AG04449 (cell line): ENCODE measurements at regions of chr10 and their contacts with region 1.

Region 1: DNA sequence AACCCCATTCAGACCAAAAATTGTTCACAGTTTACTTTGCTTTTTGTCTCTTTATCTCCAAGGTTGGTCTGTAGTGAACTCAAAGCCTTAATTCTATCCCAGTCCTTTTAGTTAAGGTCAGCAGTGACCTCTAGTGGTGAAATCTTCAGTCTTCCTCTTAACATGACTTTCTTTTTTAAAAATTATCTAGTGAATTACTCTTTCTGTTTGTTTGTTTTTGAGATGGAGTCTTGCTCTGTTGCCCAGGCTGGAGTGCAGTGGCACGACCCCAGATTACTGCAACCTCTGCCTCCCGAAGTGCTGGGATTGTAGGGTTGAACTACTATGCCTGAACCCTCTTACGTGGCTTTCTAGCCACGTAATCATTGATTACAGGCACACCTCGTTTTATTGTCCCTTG is 25.0 kb downstream of the ZNF487 start:
- DNase-seq: peak; percentile 55
- H3K4me3 ChIP-seq: no peak overlapping the region
- CTCF ChIP-seq: peak; percentile 40

Region 2: DNA sequence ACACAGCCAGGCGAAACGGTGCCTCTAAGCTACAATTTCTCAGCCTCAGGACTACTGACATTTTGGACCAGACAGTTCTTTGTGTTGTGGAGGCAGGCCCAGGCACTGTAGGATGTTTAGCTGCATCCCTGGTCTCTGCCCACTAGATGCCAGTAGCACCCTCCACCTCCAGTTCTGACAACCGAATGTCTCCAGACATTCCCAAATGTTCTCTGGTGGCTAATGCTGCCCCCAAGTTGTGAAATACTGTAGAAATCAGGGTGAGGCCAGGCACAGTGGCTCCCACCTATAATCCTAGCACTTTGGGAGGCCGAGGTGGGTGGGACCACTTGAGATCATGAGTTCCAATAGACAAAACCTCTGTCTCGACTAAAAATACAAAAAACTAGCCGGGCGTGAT is 71.2 kb before region 1 on chr10:
- CTCF ChIA-PET with region 1: interaction called, 27 read pairs
- POLR2A ChIA-PET with region 1: no interaction called
- DNase-seq: no peak
- H3K4me3 ChIP-seq: no peak overlapping the region
- CTCF ChIP-seq: peak; percentile 63

Region 3: DNA sequence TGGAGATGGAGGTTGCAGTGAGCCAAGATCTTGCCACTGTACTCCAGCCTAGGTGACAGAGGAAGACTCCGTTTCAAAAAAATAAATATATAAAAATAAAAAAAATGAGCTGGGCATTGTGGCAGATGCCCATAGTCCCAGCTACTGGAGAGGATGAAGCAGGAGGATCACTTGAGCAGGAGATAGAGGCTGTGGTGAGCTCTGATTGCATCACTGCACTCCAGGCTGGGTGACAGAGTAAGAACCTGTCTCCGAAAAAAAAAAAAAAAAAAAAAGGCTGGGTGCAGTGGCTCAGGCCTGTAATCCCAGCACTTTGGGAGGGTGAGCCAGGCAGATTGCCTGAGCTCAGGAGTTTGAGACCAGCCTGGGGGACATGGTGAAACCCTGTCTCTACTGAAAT is 13.2 kb before region 1 on chr10:
- CTCF ChIA-PET with region 1: interaction called, 12 read pairs
- POLR2A ChIA-PET with region 1: no interaction called
- DNase-seq: no peak
- H3K4me3 ChIP-seq: no peak overlapping the region
- CTCF ChIP-seq: no peak

Region 4: GRCh38 chr10:44033008-44033407 is 571.1 kb after region 1 on chr10:
- CTCF ChIA-PET with region 1: no interaction called
- POLR2A ChIA-PET with region 1: no interaction called
- DNase-seq: peak; percentile 58
- H3K4me3 ChIP-seq: no peak overlapping the region
- CTCF ChIP-seq: no peak